Activated T-helper 2 cell treated with anti-CD3 and anti-CD28 coated beads, Interferon-gamma antibody, Interleukin-2, Interleukin-4, amounts not matched to agents 10 μg/mL and 5 μg/mL and 100 μg/mL, durations not matched to agents 14 hours and 24 hours and 36 hours (primary cell): ENCODE measurements at regions of chr14 and their contacts with region 1.

Region 1: DNA sequence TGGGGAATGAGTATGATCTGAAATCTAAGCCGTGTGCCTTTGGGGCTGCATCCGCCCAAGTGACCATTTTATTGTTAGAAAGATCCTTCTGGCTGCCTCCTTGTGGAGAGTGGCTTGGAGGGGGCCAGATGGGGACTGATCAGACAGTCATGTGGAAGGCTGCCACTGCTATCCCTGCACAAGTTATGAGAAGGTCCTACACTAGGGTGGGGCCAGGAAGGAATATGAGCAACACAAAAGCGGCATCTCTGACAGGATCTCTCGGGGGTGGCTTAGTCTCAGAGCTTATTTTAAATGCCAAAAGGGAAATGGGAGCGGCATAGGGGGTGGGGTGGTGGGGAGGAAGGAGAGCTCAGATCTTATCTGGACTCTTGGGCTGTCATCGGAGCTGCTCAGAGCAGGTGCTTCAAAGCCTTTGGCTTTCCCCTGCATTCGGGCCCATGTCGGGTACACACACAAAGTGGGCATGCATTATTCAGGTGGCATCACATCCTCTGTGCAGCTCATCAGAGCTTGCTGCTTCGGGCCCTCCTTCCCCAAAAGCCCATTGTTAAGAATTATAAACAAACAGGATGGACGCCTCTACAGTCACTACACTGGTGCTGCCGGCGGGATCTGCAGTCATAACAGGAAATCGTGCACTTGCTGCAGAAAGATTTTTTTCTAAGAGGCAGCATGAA is 805.4 kb downstream of the VRK1 start:
- DNase-seq: peak; percentile 72
- H3K4me3 Mint-ChIP-seq: no peak overlapping the region
- H3K27ac Mint-ChIP-seq: no peak overlapping the region
- H3K4me1 Mint-ChIP-seq: peaks cover 29% of the 10 kb centered on the region
- H3K27me3 Mint-ChIP-seq: no peaks in the 10 kb centered on the region

Region 2: DNA sequence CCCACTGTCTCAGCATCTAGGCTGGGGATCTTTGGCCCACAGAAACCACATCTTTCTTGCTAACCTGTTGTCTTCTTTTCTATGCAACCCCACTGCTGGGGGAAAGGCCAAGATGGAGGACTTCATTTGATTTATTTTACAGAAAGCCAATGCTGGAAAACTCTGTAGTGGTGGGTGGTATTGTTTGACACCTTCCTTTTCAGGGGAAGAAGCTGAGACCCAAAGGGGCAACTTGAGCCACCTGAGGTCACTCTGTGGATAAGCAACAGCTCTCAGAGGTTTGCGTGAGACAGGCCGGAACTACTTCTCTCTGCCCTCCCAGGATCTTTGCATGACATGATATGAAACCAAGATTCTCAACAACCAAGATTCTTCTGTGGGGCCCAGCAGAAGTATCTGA is 160.2 kb before region 1 on chr14:
- intact Hi-C with region 1: loop called (anchors 1 kb)
- DNase-seq: peak; percentile 70
- H3K4me3 Mint-ChIP-seq: peak overlapping the region; percentile 65
- H3K27ac Mint-ChIP-seq: peak overlapping the region; percentile 98
- H3K4me1 Mint-ChIP-seq: peaks cover 79% of the 10 kb centered on the region
- H3K27me3 Mint-ChIP-seq: no peaks in the 10 kb centered on the region

Region 3: GRCh38 chr14:97620066-97620465 is 17.5 kb after region 1 on chr14:
- intact Hi-C with region 1: loop called (anchors 2 kb)
- DNase-seq: no peak
- H3K4me3 Mint-ChIP-seq: peak overlapping the region; percentile 59
- H3K27ac Mint-ChIP-seq: peak overlapping the region; percentile 84
- H3K4me1 Mint-ChIP-seq: peaks cover 47% of the 10 kb centered on the region
- H3K27me3 Mint-ChIP-seq: no peaks in the 10 kb centered on the region

Region 4: DNA sequence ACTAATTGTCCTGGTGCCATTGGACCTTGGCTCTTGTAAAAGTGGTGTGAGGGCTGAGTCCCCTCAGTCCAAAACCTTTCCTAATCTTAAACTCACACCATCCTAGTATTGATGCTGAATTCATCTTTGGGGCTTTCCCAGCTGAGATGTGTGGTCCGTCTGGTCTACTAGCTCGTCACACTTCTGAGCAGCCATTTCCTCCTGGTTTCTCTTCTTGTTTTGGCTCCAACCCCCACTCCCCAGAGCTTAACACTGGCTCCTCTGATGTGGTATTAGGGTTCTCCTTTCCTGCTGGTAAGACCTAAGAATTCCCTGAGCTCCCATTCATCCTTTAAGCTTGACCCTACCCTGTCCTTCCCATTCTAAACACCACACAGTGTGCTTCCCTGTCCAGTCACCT is 95.2 kb after region 1 on chr14:
- intact Hi-C with region 1: loop called (anchors 5 kb)
- DNase-seq: no peak
- H3K4me3 Mint-ChIP-seq: no peak overlapping the region
- H3K27ac Mint-ChIP-seq: peak overlapping the region; percentile 69
- H3K4me1 Mint-ChIP-seq: peaks cover 24% of the 10 kb centered on the region
- H3K27me3 Mint-ChIP-seq: no peaks in the 10 kb centered on the region

Region 5: GRCh38 chr14:97724265-97724731 is 121.7 kb after region 1 on chr14:
- intact Hi-C with region 1: loop called (anchors 5 kb)
- DNase-seq: peak; percentile 31
- H3K4me3 Mint-ChIP-seq: peak overlapping the region; percentile 72
- H3K27ac Mint-ChIP-seq: peak overlapping the region; percentile 95
- H3K4me1 Mint-ChIP-seq: peaks cover 58% of the 10 kb centered on the region
- H3K27me3 Mint-ChIP-seq: no peaks in the 10 kb centered on the region